ENCODE measurements at regions of chr6 and their contacts with region 1.

Region 1: GRCh38 chr6:149082286-149082707 is 235.2 kb upstream of the TAB2 start:
- DNase-seq: peak; percentile 88 to 90
- ATAC-seq: peak; percentile 66
- H3K4me3 ChIP-seq: no peak overlapping the region
- H3K27ac ChIP-seq: no peak overlapping the region
- H3K4me1 ChIP-seq: peaks cover 3 to 10% of the 10 kb centered on the region in 2 donors
- H3K27me3 ChIP-seq: no peaks in the 10 kb centered on the region

Region 2: DNA sequence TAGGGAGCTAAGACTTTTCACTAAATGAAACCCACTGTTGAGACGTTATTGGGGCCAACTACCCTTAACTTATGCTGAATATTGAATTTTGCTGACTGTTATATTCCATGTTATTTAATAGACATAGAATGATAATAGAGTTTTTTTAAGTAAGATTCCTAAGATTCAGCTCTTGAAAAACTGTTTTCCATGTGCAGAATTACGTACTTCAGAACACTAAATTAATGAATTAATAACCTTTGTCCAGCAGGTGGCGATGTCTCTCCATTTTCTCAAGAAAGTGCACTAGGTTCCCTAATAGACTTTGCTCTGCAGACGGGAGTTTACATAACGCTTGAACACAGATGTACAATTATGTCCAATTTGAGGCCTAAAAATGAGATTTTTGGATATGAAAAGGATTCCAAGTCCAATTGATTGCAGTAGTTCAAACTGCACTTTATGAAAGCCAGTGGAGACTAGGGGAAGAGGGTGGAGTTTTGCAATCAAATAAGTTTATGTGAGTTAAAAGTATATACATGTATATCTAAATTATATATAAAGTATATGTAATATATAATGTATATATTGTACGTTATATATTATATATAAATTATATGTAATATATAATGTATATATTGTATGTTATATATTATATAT is 53.4 kb before region 1 on chr6:
- intact Hi-C with region 1: loop called in 1 of 2 experiments (anchors 2 kb)
- DNase-seq: peak in 1 of 2 donors; percentile 62
- ATAC-seq: peak; percentile 83
- H3K4me3 ChIP-seq: no peak overlapping the region
- H3K27ac ChIP-seq: no peak overlapping the region
- H3K4me1 ChIP-seq: peaks cover 0 to 3% of the 10 kb centered on the region in 2 donors
- H3K27me3 ChIP-seq: no peaks in the 10 kb centered on the region

Region 3: DNA sequence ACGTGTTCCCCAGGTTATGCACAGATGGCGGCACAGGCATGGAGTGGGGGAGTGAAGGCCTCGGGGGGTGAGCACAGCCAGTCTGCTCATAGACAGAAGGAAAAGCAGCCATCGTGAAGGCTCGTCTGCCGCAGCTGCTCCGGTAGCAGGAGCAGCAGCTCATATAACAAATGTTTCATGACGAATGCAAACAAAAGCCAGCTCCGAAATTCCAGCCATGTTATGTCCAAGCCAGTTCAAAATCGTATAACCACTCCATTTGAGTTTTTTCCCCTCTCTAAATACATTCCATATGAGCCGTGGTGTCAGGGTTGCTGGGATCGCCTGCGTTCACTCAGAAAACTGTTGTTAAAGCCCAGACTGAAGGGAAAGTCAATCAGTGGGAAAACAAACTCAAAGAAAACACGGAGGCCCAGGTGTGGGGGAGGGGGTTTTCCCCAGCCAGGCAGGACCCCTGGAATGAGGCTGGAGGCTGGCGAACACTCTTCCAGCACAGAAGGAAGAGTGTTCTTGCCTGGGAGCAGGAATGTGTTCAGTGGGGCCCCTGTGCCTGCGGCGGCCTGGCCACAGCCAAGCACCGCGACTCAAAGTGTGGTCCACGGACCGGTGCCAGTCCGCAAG is 45.1 kb before region 1 on chr6:
- intact Hi-C with region 1: loop called in 1 of 2 experiments (anchors 5 kb)
- DNase-seq: no peak
- ATAC-seq: no peak
- H3K4me3 ChIP-seq: no peak overlapping the region
- H3K27ac ChIP-seq: no peak overlapping the region
- H3K4me1 ChIP-seq: peaks cover 0 to 3% of the 10 kb centered on the region in 2 donors
- H3K27me3 ChIP-seq: no peaks in the 10 kb centered on the region

Region 4: DNA sequence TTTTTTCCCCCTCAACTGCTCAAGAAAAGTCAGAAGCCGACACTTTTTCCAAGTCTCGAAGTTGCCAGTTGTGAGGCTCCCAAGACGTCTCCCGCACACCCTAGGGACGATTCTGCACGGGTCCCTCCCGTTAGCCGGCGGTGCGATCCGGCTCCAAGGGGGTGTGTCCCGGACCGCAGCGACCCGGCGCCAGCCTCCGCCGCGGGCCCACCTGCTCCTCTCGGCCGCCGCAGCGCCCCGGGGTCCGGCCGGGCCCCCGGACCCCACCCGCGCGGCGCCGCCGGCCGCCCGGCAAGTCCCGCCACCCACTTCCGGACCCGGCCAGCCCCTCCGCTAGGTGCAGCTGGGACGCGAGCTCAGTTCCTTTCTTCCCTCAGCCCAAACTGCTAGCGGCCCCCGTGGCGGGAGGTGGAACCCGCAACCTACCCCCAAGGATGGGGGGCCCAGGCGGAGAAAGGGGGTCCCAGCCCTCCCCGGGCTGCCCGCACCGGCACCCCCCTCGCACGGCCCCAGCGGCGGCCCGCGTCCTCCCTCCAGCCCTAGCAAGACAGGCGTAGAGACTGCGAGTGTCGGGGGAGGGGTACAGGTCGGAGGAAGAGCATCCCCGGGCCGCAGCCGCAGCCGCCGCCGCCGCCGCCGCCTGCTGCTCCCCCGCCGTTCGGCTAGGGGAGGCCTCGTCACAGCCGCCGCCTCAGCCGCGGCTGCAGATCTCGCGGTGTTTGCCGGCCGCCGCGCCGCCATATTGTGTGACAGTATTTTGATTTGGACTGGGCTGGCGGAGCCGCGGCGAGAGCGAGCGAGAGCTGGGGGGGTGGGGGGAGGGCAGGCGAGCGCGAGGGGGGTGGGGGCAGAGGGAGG is 234.7 kb after region 1 on chr6:
- intact Hi-C with region 1: loop called in 1 of 2 experiments (anchors 10 kb)
- DNase-seq: peak; percentile 94 to 97
- ATAC-seq: peak; percentile 95
- H3K4me3 ChIP-seq: peak overlapping the region; percentile 63 to 100
- H3K27ac ChIP-seq: peak overlapping the region; percentile 82 to 90
- H3K4me1 ChIP-seq: peaks cover 0 to 2% of the 10 kb centered on the region in 2 donors
- H3K27me3 ChIP-seq: peaks cover 0 to 1% of the 10 kb centered on the region in 2 donors

Region 5: DNA sequence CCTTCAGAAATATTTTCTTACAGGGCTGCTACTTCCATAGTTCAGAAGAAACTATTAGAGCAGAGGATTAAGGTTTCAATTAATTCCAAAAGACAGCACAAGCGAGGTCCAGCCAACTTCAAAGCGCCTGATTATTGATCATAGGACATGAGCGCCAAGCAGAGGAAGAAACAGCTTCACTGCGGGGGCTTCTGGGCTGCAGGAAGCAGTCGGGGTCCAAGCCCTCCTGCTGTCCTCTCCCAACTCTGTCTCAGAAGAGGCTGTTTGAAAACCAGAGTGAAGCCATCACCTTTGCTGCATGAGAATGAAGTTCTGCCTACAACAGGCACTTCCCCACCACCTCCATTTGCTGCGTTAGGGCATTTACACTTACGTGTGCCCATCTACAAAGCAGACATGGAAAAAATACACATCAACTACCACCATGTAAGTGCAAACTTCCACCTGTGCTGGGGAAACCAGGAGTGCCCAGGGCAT is 341.7 kb after region 1 on chr6:
- intact Hi-C with region 1: loop called in 1 of 2 experiments (anchors 2 kb)
- DNase-seq: no peak
- ATAC-seq: no peak
- H3K4me3 ChIP-seq: no peak overlapping the region
- H3K27ac ChIP-seq: no peak overlapping the region
- H3K4me1 ChIP-seq: no peaks in the 10 kb centered on the region
- H3K27me3 ChIP-seq: no peaks in the 10 kb centered on the region

Region 6: DNA sequence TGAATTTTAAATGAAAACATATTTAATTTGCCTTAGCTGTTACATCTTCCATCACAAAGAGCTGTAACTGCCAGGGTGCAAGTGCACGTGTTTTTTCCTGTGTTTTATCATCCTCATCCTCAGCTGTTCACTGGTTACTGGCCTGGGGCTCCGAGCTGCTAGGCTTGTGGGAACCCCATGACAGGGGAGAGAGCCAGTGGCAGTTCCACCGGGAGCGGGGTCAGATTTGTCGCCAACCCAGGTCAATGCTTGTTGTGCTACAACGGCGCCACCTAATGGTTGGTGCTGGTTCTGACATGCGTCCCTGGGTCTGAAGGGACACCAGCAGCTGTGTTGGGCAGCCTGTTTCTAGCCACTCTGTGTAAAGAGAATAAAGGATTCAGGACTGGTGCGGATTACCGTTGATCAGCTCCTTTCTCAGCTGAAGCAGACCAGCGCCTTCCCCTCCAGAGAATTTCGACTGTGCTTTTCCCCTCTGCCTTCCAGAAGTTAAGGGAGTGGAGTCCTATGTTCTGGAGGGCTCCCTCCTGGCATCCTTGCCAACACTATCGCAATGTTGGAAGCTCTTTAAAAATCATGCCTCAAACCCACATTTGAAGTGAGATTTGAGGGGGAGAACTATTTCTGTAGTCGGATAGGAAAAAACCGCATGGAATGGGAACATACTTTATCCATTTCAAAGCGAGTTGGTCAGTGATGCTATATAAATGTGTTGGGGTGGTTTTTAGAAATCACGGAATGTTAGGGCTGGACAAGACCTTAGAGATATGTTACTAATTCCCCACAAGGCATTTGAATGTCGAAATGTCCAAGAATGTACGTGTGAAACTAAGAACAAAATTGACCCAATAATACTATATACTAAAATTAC is 349.8 kb after region 1 on chr6:
- intact Hi-C with region 1: loop called (anchors 2 to 5 kb)
- DNase-seq: peak; percentile 93 to 96
- ATAC-seq: peak; percentile 92
- H3K4me3 ChIP-seq: no peak overlapping the region
- H3K27ac ChIP-seq: no peak overlapping the region
- H3K4me1 ChIP-seq: no peaks in the 10 kb centered on the region
- H3K27me3 ChIP-seq: no peaks in the 10 kb centered on the region

Region 7: GRCh38 chr6:149513915-149514314 is 431.6 kb after region 1 on chr6:
- intact Hi-C with region 1: loop called (anchors 5 to 10 kb)
- DNase-seq: no peak
- ATAC-seq: no peak
- H3K4me3 ChIP-seq: no peak overlapping the region
- H3K27ac ChIP-seq: no peak overlapping the region
- H3K4me1 ChIP-seq: no peaks in the 10 kb centered on the region
- H3K27me3 ChIP-seq: no peaks in the 10 kb centered on the region